ENCODE measurements at regions of chr2 and their contacts with region 1.

Region 1: GRCh38 chr2:39938035-39938835 is 159.2 kb upstream of the THUMPD2 start:
- ATAC-seq: no peak
- H3K4me3 ChIP-seq: no peak overlapping the region
- H3K27ac ChIP-seq: no peak overlapping the region
- H3K4me1 ChIP-seq: peaks cover 0 to 8% of the 10 kb centered on the region in 2 donors

Region 2: DNA sequence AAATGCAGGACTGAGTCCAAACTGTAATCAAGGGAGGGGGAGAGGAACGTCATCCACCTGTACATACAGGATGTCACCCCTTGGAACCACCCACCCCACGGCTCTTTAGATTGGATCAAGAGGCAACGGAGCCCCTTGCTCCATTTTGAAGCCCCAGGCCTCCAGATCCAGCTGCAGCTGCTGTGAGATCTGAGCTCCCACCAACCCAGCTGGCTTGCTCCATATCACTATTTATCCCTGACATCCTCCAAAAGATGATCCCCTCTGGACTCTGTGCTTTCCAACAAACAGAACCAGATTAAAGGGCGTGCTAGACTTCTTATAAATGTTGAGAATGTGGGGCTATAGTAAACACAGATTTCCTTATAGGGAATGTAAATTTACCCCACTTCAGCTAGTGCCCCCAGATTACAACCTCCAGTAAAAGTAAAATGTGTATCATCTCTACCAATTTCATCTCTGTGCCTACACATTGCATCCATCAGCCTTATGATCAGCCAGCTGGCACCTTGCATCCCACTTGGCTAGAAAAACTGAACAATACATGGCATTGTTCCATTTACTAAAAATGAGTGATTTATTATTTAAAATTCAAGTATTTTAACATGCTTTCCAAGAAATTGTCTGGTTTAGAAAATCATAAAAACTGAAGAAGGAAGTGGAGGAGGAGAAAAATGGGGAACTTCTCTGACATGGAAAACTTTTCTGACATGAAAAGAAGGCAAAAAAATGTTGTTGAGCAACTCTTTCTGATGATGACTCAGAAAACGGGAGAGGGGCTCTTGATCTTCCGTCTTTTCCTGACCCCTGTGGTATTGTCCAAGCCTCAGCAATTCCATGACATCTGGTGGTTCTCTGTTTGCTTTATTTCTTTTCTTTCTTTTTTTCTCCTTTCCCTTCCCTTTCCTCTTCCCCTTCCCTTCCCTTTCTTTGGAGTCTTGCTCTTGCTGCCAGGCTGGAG is 103.5 kb after region 1 on chr2:
- in situ Hi-C with region 1: no loop called
- ATAC-seq: no peak
- H3K4me3 ChIP-seq: no peak overlapping the region
- H3K27ac ChIP-seq: no peak overlapping the region
- H3K4me1 ChIP-seq: no peaks in the 10 kb centered on the region

Region 3: GRCh38 chr2:40168041-40168442 is 229.8 kb after region 1 on chr2:
- in situ Hi-C with region 1: no loop called
- ATAC-seq: no peak
- H3K4me3 ChIP-seq: no peak overlapping the region
- H3K27ac ChIP-seq: no peak overlapping the region
- H3K4me1 ChIP-seq: peaks cover 0 to 10% of the 10 kb centered on the region in 2 donors

Region 4: GRCh38 chr2:40220177-40220925 is 282.1 kb after region 1 on chr2:
- in situ Hi-C with region 1: no loop called
- ATAC-seq: no peak
- H3K4me3 ChIP-seq: no peak overlapping the region
- H3K27ac ChIP-seq: no peak overlapping the region
- H3K4me1 ChIP-seq: peaks cover 0 to 6% of the 10 kb centered on the region in 2 donors

Region 5: GRCh38 chr2:40534528-40534927 is 596.3 kb after region 1 on chr2:
- in situ Hi-C with region 1: loop called in 1 of 9 experiments (anchors 25 kb)
- ATAC-seq: no peak
- H3K4me3 ChIP-seq: no peak overlapping the region
- H3K27ac ChIP-seq: no peak overlapping the region
- H3K4me1 ChIP-seq: peaks cover 14 to 17% of the 10 kb centered on the region in 2 donors